T-cell (primary cell): ENCODE measurements at regions of chr14 and their contacts with region 1.

Region 1: DNA sequence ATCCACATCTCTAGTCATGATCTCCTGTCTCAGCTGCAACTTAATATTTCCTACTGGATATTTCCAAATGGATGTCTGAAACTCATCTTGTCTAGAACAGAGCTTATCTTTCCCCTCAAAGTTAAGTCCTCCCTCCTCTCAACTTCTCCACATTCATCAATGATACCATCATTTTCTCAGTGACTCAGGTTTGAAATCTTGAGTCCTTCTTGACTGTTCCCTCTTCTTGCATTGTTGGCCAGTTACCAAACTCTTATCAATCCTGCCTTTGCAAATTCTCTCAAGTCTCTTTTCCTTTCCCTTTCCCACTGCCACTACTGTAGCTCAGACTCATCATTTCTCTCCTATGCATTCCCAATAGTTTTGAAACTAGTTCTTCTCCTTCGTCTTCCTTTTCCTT is 14.3 kb upstream of the CHURC1 start:
- DNase-seq: no peak
- ATAC-seq: no peak
- H3K4me3 ChIP-seq: no peak overlapping the region
- H3K4me3 Mint-ChIP-seq: no peak overlapping the region
- H3K27ac ChIP-seq: no peak overlapping the region
- H3K27ac Mint-ChIP-seq: no peak overlapping the region
- H3K4me1 ChIP-seq: no peaks in the 10 kb centered on the region
- H3K4me1 Mint-ChIP-seq: no peaks in the 10 kb centered on the region
- H3K27me3 ChIP-seq: peaks cover 0 to 9% of the 10 kb centered on the region in 2 experiments
- H3K27me3 Mint-ChIP-seq: peaks cover 0 to 6% of the 10 kb centered on the region in 2 donors

Region 2: DNA sequence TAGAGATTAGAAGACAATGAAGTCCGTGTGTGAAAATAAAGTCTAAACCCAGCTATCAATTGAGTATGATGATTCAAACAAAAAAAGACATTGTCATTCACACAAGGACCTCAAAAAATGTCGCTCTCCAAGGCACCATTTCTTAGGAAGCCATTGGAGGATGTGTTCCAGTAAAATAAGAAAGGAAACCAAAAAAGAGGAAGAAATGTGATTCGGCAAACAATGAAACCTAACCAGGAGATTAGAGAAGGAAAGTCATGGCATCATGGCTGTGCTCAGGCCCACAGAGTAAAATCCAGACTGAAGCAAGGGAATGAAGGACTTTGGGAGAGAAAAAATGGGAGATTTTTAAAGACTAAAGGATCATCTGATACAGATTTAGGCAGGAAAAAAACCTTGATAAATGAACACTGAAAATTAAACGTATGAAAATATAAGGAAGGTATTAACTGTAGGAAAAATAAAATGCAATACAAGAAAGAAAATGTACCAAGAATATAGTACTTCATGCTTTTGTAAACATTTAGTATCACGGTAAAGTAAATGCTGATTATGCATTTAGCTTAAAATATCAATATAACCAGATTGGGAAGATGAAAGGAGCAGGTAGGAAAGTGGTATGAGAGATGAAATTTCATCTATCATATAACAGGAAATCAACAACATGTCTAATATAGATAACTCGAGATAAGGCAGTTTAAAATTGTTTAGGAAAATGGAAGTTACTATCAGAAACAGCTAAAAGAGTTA is 550.0 kb before region 1 on chr14:
- CTCF ChIA-PET with region 1: interaction called in 1 of 2 experiments, 10 read pairs
- POLR2A ChIA-PET with region 1: no interaction called
- DNase-seq: no peak
- ATAC-seq: no peak
- H3K4me3 ChIP-seq: no peak overlapping the region
- H3K4me3 Mint-ChIP-seq: no peak overlapping the region
- H3K27ac ChIP-seq: no peak overlapping the region
- H3K27ac Mint-ChIP-seq: no peak overlapping the region
- H3K4me1 ChIP-seq: no peaks in the 10 kb centered on the region
- H3K4me1 Mint-ChIP-seq: no peaks in the 10 kb centered on the region
- H3K27me3 ChIP-seq: no peaks in the 10 kb centered on the region
- H3K27me3 Mint-ChIP-seq: no peaks in the 10 kb centered on the region

Region 3: GRCh38 chr14:64656986-64657385 is 243.0 kb before region 1 on chr14:
- CTCF ChIA-PET with region 1: no interaction called
- POLR2A ChIA-PET with region 1: interaction called in 1 of 2 experiments, 21 read pairs
- DNase-seq: no peak
- ATAC-seq: no peak
- H3K4me3 ChIP-seq: no peak overlapping the region
- H3K4me3 Mint-ChIP-seq: no peak overlapping the region
- H3K27ac ChIP-seq: no peak overlapping the region
- H3K27ac Mint-ChIP-seq: no peak overlapping the region
- H3K4me1 ChIP-seq: peaks cover 0 to 6% of the 10 kb centered on the region in 2 experiments
- H3K4me1 Mint-ChIP-seq: peaks cover 7 to 13% (median 9%) of the 10 kb centered on the region in 3 donors
- H3K27me3 ChIP-seq: peaks cover 0 to 12% of the 10 kb centered on the region in 2 experiments
- H3K27me3 Mint-ChIP-seq: peaks cover 6 to 14% of the 10 kb centered on the region in 2 donors

Region 4: DNA sequence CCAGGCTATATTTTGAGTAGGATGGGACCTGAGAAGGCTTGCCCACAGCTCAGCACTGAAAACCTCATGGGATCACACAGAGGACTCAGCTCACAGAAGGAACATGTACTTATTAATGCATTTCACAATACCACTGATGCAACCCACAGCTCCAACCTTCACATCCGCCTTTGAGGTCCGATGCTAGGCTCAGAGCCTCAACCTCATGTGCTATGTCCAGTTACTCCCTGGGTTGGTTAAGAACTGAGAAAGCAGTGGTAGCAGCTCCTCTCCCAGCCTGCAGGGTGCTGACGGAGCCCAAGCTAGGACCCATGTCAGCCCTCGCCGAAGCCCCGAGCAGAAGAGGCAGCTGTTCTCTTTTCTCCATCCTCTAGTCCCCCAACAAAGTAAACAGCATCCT is 73.1 kb before region 1 on chr14:
- CTCF ChIA-PET with region 1: no interaction called
- POLR2A ChIA-PET with region 1: no interaction called
- DNase-seq: no peak
- ATAC-seq: no peak
- H3K4me3 ChIP-seq: no peak overlapping the region
- H3K4me3 Mint-ChIP-seq: no peak overlapping the region
- H3K27ac ChIP-seq: no peak overlapping the region
- H3K27ac Mint-ChIP-seq: no peak overlapping the region
- H3K4me1 ChIP-seq: peaks cover 0 to 8% of the 10 kb centered on the region in 2 experiments
- H3K4me1 Mint-ChIP-seq: peaks cover 5 to 10% (median 6%) of the 10 kb centered on the region in 3 donors
- H3K27me3 ChIP-seq: peaks cover 0 to 31% of the 10 kb centered on the region in 2 experiments
- H3K27me3 Mint-ChIP-seq: peaks cover 4 to 13% of the 10 kb centered on the region in 2 donors

Region 5: GRCh38 chr14:64914237-64914971 is 14.4 kb after region 1 on chr14 and contains the start of gene CHURC1:
- CTCF ChIA-PET with region 1: no interaction called
- POLR2A ChIA-PET with region 1: interaction called in 1 of 2 experiments, 10 read pairs
- DNase-seq: peak; percentile 88 to 99 (median 96)
- ATAC-seq: peak; percentile 97 to 99 (median 98)
- H3K4me3 ChIP-seq: peak within 1 kb of the TSS; percentile 95 to 98
- H3K4me3 Mint-ChIP-seq: peak within 1 kb of the TSS; percentile 92 to 98 (median 93)
- H3K27ac ChIP-seq: peak within 1 kb of the TSS; percentile 99
- H3K27ac Mint-ChIP-seq: peak within 1 kb of the TSS; percentile 89 to 90
- H3K4me1 ChIP-seq: peaks cover 17 to 30% of the 10 kb centered on the region in 2 experiments
- H3K4me1 Mint-ChIP-seq: peaks cover 47 to 56% (median 53%) of the 10 kb centered on the region in 3 donors
- H3K27me3 ChIP-seq: no peaks in the 10 kb centered on the region
- H3K27me3 Mint-ChIP-seq: peaks cover 0 to 3% of the 10 kb centered on the region in 2 donors
- total RNA-seq, gene CHURC1: 57.6 to 99.7 (median 91.1) TPM

Region 6: DNA sequence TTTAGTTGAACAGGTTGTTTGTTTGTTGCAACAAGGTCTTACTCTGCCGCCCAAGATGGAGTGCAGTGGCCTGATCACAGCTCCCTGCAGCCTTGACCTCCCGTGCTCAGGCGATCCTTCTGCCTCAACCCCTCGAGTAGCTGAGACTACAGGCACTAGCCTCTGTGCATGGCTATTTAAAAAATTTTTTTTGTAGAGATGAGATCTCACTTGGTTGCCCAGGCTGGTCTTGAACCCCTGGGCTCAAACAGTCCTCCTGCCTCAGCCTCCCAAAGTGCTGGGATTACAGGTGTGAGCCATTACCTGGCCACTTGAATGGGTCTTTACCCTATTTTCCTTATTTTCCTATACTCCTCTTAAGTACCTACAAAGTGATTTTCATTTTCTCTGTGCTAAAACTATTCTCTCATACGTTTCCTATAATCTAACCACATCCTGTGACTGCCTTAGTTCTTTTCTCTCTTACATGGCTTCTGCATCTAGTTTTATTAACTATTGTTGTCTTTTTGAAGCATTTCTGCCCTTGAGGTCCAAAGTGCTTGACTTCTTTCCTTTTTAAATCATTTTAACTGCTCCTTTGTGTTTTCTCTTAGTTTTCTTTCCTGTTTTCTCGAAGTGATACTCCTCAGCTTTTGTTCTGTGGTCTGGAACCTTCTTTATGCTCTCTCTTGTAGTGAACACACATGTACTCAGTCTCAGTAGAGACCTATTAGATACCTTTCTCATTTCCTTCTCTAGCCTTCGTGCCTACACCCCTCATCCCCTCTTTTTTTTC is 28.5 kb after region 1 on chr14:
- CTCF ChIA-PET with region 1: interaction called in 1 of 2 experiments, 3 read pairs
- POLR2A ChIA-PET with region 1: interaction called in 1 of 2 experiments, 14 read pairs
- DNase-seq: peak in 4 of 35 experiments; percentile 3 to 60 (median 15)
- ATAC-seq: peak; percentile 76 to 86 (median 82)
- H3K4me3 ChIP-seq: peak overlapping the region; percentile 20 to 30
- H3K4me3 Mint-ChIP-seq: no peak overlapping the region
- H3K27ac ChIP-seq: peak overlapping the region; percentile 82
- H3K27ac Mint-ChIP-seq: no peak overlapping the region
- H3K4me1 ChIP-seq: peaks cover 38 to 52% of the 10 kb centered on the region in 2 experiments
- H3K4me1 Mint-ChIP-seq: peaks cover 32 to 33% (median 32%) of the 10 kb centered on the region in 3 donors
- H3K27me3 ChIP-seq: no peaks in the 10 kb centered on the region
- H3K27me3 Mint-ChIP-seq: no peaks in the 10 kb centered on the region